IMR-90 (cell line): ENCODE measurements at regions of chr9 and their contacts with region 1.

Region 1: DNA sequence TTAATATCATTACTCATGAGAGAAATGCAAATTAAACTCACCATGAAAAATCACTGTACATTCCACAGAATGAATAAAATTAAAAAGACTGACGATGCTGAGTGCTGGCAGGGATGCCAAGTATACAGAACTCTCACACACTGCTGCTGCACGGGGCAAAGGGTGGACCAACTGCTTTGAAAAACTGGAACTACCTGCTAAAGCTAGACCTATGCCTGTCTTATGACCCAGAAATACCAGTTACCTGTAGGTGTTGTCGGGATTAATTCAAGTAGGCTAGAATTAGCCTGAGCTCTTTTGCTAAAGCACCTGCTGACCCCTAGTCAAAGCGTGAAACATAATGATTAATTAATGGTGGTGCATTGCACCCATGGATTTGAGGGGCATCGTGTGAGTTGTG is 36.5 kb upstream of the ANKRD18A start:
- DNase-seq: no peak
- ATAC-seq: no peak
- H3K4me3 ChIP-seq: no peak overlapping the region
- H3K27ac ChIP-seq: no peak overlapping the region
- H3K4me1 ChIP-seq: no peaks in the 10 kb centered on the region
- H3K27me3 ChIP-seq: peaks cover 2% of the 10 kb centered on the region; the same call in 1 of the 2 replicates
- CTCF ChIP-seq: no peak
- POLR2A ChIP-seq: no peak
- RAD21 ChIP-seq: no peak

Region 2: GRCh38 chr9:38467404-38467803 is 189.5 kb before region 1 on chr9:
- CTCF ChIA-PET with region 1: no interaction called
- POLR2A ChIA-PET with region 1: no interaction called
- dilution Hi-C with region 1: no loop called
- in situ Hi-C with region 1: no loop called
- intact Hi-C with region 1: no loop called
- DNase-seq: no peak
- ATAC-seq: no peak
- H3K4me3 ChIP-seq: no peak overlapping the region
- H3K27ac ChIP-seq: no peak overlapping the region
- H3K4me1 ChIP-seq: no peaks in the 10 kb centered on the region
- H3K27me3 ChIP-seq: peaks cover 5% of the 10 kb centered on the region
- CTCF ChIP-seq: no peak
- POLR2A ChIP-seq: no peak
- RAD21 ChIP-seq: no peak

Region 3: DNA sequence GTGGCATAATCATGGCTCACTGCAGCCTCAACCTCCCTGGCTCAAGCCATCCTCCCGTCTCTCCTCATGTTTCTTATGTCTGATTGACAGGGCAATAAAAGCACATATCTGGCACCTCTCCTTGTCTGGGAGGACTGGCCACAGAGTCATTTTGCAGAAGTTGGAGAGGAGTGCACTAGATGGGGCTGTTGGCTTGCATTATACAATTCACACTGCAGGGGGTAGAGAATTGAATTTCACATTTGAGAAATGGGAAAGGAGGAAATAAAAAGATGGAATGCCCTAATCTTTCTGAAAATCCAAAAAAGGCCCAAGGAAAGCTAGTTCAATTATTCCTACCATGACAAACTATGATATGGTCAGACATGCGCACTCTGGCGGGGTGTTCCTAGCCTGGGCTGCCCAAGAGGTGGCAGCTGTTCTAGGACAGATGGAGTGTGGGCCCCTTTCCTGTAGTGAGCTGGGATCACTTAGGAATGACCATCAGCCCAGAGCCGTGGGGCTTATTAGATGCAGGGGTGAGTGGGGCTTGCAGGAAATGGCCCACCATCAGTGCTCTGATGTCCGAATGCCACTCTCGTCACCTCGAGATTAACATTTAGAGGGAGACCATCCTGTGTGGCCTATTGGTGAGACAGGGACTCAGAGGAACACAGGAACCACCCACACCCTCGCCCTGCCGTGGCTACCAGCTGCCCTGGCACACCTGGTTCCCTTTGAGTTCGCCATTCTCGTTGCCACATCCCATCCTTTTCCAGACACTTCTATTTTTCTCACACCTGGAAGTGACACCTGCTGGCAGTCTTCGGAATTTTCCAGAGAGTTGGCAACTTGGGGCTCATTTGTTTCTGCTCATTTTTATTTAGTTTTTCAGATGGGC is 14.7 kb before region 1 on chr9:
- CTCF ChIA-PET with region 1: no interaction called
- POLR2A ChIA-PET with region 1: no interaction called
- dilution Hi-C with region 1: no loop called
- in situ Hi-C with region 1: no loop called
- intact Hi-C with region 1: loop called (anchors 2 kb)
- DNase-seq: peak; percentile 22
- ATAC-seq: peak; percentile 79
- H3K4me3 ChIP-seq: no peak overlapping the region
- H3K27ac ChIP-seq: no peak overlapping the region
- H3K4me1 ChIP-seq: no peaks in the 10 kb centered on the region
- H3K27me3 ChIP-seq: no peaks in the 10 kb centered on the region; the same call in 1 of the 2 replicates
- CTCF ChIP-seq: peak; percentile 54
- POLR2A ChIP-seq: no peak
- RAD21 ChIP-seq: peak; percentile 68